ENCODE measurements at regions of chr7 and their contacts with region 1.

Region 1: DNA sequence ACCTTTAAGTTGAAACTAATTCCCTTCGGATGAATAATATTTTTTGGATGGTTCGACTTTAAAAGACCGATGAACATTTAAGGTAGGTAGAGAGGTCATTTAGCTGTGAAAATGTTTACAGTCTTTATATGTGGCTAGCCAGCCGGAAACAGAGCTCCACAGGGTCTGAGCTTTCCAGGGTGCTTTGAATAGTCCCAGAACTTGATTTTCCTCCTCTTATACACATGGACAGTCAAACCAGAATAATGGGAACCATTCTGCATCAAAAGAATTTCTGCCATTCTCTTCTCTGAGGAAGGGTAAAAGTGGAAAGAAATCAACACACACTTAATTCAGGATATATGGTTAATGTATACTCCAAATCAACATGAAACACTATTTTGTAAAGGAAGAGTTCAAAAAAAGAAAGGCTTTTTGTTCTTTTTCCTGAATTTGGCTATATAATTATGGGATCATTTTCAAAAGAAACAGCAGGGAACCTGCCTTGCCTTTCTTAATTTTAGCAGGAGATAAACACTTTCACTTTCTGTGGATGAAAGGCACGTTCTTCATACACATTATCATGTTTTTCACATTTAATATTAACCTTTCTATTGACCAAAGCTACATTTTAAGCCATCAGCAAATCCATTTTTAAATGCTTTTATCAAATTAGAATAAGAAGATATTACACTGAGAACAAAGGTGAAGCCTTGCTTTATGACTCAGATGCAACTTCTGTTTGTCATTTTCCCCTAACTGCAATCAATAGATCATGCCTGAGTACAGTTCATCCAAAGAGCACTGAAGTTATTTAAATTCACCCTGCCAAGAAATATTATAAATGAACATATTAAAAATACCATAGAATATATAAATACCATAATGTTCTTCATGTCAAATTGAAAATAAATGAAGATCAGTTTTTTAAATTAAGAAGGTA is 307.3 kb downstream of the THSD7A start:
- DNase-seq: no peak
- ATAC-seq: no peak
- H3K4me3 ChIP-seq: no peak overlapping the region
- H3K27ac ChIP-seq: no peak overlapping the region
- H3K4me1 ChIP-seq: no peaks in the 10 kb centered on the region
- H3K27me3 ChIP-seq: no peaks in the 10 kb centered on the region
- CTCF ChIP-seq: no peak
- POLR2A ChIP-seq: no peak
- RAD21 ChIP-seq: no peak

Region 2: GRCh38 chr7:11466517-11467105 is 58.1 kb before region 1 on chr7:
- CTCF ChIA-PET with region 1: no interaction called
- POLR2A ChIA-PET with region 1: no interaction called
- dilution Hi-C with region 1: no loop called
- in situ Hi-C with region 1: no loop called
- intact Hi-C with region 1: loop called (anchors 1 kb)
- DNase-seq: no peak
- ATAC-seq: no peak
- H3K4me3 ChIP-seq: no peak overlapping the region
- H3K27ac ChIP-seq: no peak overlapping the region
- H3K4me1 ChIP-seq: no peaks in the 10 kb centered on the region
- H3K27me3 ChIP-seq: no peaks in the 10 kb centered on the region
- CTCF ChIP-seq: no peak
- POLR2A ChIP-seq: no peak
- RAD21 ChIP-seq: no peak

Region 3: DNA sequence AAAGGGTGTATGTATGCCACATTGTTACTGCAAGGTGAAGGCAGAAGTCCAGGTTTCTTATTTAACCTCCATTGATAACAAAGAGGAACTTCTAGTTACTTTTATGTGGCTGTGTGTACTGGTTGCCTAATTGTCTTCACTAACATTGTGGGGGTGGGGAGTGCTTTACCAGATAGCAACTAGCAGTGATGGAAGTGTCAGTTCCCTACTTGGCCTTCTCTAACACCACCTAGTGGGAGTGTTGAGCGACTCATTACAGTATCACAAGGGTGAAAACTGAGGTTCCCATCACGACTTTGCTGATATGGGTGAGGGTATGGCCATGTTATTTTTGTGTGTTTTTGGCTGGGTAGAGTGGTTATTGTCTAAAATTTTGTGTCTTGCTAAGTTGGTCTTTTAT is 32.9 kb after region 1 on chr7:
- CTCF ChIA-PET with region 1: no interaction called
- POLR2A ChIA-PET with region 1: no interaction called
- dilution Hi-C with region 1: no loop called
- in situ Hi-C with region 1: no loop called
- intact Hi-C with region 1: no loop called
- DNase-seq: no peak
- ATAC-seq: no peak
- H3K4me3 ChIP-seq: no peak overlapping the region
- H3K27ac ChIP-seq: no peak overlapping the region
- H3K4me1 ChIP-seq: no peaks in the 10 kb centered on the region
- H3K27me3 ChIP-seq: no peaks in the 10 kb centered on the region
- CTCF ChIP-seq: no peak
- POLR2A ChIP-seq: no peak
- RAD21 ChIP-seq: no peak

Region 4: DNA sequence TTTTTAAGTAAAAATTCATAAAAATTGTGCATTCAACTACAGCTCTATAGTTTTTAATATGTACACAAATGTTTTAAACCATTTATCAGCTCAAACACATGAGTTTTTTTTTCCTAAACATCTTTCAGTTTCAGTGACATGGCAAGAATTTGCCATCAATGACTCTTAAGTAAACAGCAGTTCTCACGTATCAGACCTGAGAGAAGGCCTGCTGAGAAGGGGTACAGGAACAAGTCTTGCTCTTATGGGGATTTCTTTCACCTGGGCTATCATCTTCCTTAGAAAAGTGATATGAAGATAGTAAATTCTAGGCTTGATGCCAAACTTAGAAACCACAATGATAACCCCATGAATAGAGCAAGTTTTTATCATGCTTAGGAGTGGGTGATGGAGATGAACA is 1630.5 kb after region 1 on chr7:
- CTCF ChIA-PET with region 1: no interaction called
- POLR2A ChIA-PET with region 1: no interaction called
- dilution Hi-C with region 1: no loop called
- in situ Hi-C with region 1: no loop called
- intact Hi-C with region 1: loop called (anchors 5 kb)
- DNase-seq: peak; percentile 10
- ATAC-seq: no peak
- H3K4me3 ChIP-seq: no peak overlapping the region
- H3K27ac ChIP-seq: no peak overlapping the region
- H3K4me1 ChIP-seq: no peaks in the 10 kb centered on the region
- H3K27me3 ChIP-seq: no peaks in the 10 kb centered on the region; the same call in 1 of the 2 replicates
- CTCF ChIP-seq: no peak
- POLR2A ChIP-seq: no peak
- RAD21 ChIP-seq: no peak

Measured in IMR-90 (cell line).